Natural killer cell (primary cell): ENCODE measurements at regions of chr1 and their contacts with region 1.

Region 1: GRCh38 chr1:244603498-244603897 is 49.4 kb upstream of the DESI2 start:
- DNase-seq: peak in 1 of 2 donors; percentile 62
- ATAC-seq: peak; percentile 38 to 69 (median 63)
- H3K4me3 ChIP-seq: no peak overlapping the region
- H3K4me3 Mint-ChIP-seq: no peak overlapping the region
- H3K27ac ChIP-seq: no peak overlapping the region
- H3K27ac Mint-ChIP-seq: no peak overlapping the region
- H3K4me1 ChIP-seq: no peaks in the 10 kb centered on the region
- H3K4me1 Mint-ChIP-seq: no peaks in the 10 kb centered on the region
- H3K27me3 ChIP-seq: no peaks in the 10 kb centered on the region
- H3K27me3 Mint-ChIP-seq: peaks cover 8 to 18% of the 10 kb centered on the region in 2 donors
- CTCF ChIP-seq: peak; percentile 89

Region 2: DNA sequence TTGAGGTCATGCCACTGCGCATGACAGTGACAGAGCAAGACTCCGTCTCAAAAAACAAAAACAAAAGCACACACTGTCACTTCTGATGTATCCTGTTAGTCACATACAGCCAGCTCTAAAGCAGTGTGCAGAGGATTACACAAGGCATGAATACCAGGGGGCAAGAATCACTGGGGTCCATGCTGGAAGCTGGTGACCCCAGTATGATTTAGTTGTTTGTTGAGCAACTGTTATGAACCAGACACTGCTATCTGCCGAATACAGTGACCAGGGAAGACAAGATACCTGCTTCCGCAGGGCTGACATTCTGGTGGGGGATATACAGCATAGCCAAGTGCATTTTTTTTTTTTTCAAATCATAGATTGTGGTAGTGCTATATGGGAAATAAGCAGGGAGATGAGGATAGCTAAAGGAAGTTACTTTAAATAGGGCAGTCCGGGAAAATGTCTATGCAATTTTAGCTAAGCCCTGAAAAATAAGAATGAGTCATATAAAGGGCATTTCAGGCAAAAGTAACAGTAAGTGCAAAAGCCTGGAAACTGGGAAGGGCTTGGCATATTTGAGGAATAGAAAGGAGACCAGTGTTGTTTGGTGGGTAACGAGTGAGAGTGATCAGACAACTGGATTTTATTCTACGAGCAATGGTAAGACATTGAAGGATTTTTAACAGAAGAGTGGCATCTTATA is 221.5 kb before region 1 on chr1:
- intact Hi-C with region 1: no loop called
- DNase-seq: no peak
- ATAC-seq: no peak
- H3K4me3 ChIP-seq: no peak overlapping the region
- H3K4me3 Mint-ChIP-seq: no peak overlapping the region
- H3K27ac ChIP-seq: no peak overlapping the region
- H3K27ac Mint-ChIP-seq: no peak overlapping the region
- H3K4me1 ChIP-seq: no peaks in the 10 kb centered on the region
- H3K4me1 Mint-ChIP-seq: no peaks in the 10 kb centered on the region
- H3K27me3 ChIP-seq: no peaks in the 10 kb centered on the region
- H3K27me3 Mint-ChIP-seq: no peaks in the 10 kb centered on the region
- CTCF ChIP-seq: no peak

Region 3: DNA sequence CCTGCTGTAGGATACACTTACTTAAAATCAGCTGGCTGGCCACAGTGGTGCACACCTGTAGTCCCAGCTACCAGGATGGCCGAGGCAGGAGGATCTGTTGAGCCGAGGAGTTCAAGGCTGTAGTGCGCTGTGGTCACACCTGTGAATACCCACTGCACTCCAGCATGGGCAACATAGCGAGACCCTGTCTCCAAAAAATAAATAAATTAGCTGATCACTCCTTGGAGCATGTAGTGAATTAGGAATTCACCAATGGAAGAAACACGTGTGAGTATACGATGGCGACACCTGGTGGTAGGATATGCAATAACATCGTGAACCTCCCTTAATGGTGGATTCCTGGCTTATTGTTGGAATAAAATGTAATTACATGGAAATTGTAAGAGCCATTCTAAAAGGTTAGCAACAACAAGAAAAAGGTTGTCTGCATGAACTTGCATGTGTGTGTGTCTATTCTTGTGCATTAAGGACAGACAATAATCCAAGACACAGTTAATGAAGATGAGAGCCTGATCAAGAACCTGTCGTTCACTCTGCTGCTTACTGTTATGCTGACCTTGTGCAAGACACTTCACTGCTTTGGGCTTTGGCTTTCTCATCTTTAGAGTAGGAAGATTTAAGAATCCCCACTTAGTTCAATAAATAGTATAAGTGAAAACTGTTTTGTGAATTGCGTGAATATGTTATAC is 193.4 kb after region 1 on chr1:
- intact Hi-C with region 1: loop called (anchors 1 kb)
- DNase-seq: peak; percentile 23 to 84
- ATAC-seq: peak; percentile 44 to 65 (median 64)
- H3K4me3 ChIP-seq: no peak overlapping the region
- H3K4me3 Mint-ChIP-seq: no peak overlapping the region
- H3K27ac ChIP-seq: no peak overlapping the region
- H3K27ac Mint-ChIP-seq: no peak overlapping the region
- H3K4me1 ChIP-seq: no peaks in the 10 kb centered on the region
- H3K4me1 Mint-ChIP-seq: peaks cover 0 to 4% of the 10 kb centered on the region in 2 donors
- H3K27me3 ChIP-seq: no peaks in the 10 kb centered on the region
- H3K27me3 Mint-ChIP-seq: peaks cover 2 to 6% of the 10 kb centered on the region in 2 donors
- CTCF ChIP-seq: peak; percentile 97